MCF 10A (cell line): ENCODE measurements at regions of chr15 and their contacts with region 1.

Region 1: GRCh38 chr15:62071711-62072308 is 5.0 kb downstream of the C2CD4A start:
- DNase-seq: peak; percentile 44
- H3K4me3 Mint-ChIP-seq: no peak overlapping the region
- H3K27ac Mint-ChIP-seq: no peak overlapping the region
- H3K4me1 Mint-ChIP-seq: peaks cover 8% of the 10 kb centered on the region
- H3K27me3 Mint-ChIP-seq: peaks cover 9% of the 10 kb centered on the region
- CTCF ChIP-seq: peak; percentile 57

Region 2: GRCh38 chr15:61871926-61872522 is 199.8 kb before region 1 on chr15:
- CTCF ChIA-PET with region 1: no interaction called
- POLR2A ChIA-PET with region 1: no interaction called
- intact Hi-C with region 1: loop called (anchors 1 kb)
- DNase-seq: peak; percentile 38
- H3K4me3 Mint-ChIP-seq: no peak overlapping the region
- H3K27ac Mint-ChIP-seq: peak overlapping the region; percentile 31
- H3K4me1 Mint-ChIP-seq: no peaks in the 10 kb centered on the region
- H3K27me3 Mint-ChIP-seq: no peaks in the 10 kb centered on the region
- CTCF ChIP-seq: peak; percentile 54

Region 3: DNA sequence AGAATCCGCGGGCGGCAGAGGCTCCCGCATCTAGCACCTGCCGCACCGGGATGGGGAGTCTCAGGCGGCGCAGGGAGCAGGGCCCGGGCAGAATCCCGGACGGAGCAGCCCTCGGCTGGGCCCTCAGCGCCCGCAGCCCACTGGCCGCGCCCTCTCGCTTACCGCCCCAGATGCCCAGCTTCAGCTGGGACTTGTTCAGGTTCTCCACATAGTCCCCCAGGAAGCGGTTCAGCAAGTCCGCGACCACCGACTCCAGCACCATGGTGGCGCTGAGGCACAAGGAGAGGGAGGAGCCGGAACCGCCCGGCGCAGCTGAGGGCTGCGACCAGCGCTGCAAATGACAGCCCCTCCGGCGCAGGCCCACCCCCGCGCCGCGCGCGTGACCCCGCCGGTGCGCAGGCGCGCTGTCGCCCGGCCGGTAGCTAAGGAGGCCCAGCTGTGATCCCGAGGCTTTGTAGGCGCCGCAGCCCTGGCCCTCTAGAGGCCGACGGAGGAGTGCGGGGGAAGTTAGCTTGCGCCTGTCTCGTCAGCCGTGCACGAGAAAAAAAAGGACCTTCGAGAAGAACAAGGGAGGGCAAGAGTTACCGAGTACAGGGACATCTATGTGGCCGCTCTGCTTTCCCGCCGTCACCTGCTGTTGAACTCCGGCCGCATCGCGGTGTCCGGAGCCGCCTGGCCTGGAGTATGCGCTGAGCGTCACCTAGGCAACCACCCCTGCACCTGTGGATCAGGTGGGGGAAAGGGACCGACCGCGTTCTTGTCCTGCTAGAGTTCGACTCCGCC is 11.5 kb before region 1 on chr15 and contains the start of gene VPS13C:
- CTCF ChIA-PET with region 1: interaction called, 16 read pairs
- POLR2A ChIA-PET with region 1: interaction called, 20 read pairs
- intact Hi-C with region 1: no loop called
- DNase-seq: peak; percentile 90
- H3K4me3 Mint-ChIP-seq: peak within 1 kb of the TSS; percentile 88
- H3K27ac Mint-ChIP-seq: peak within 1 kb of the TSS; percentile 86
- H3K4me1 Mint-ChIP-seq: peaks cover 28% of the 10 kb centered on the region
- H3K27me3 Mint-ChIP-seq: no peaks in the 10 kb centered on the region
- CTCF ChIP-seq: peak; percentile 69
- total RNA-seq, gene VPS13C: 47.4 and 58.7 TPM in 2 replicates

Region 4: GRCh38 chr15:62083168-62084154 is 11.7 kb after region 1 on chr15:
- CTCF ChIA-PET with region 1: interaction called, 12 read pairs
- POLR2A ChIA-PET with region 1: interaction called, 9 read pairs
- intact Hi-C with region 1: no loop called
- DNase-seq: no peak
- H3K4me3 Mint-ChIP-seq: no peak overlapping the region
- H3K27ac Mint-ChIP-seq: no peak overlapping the region
- H3K4me1 Mint-ChIP-seq: peaks cover 9% of the 10 kb centered on the region
- H3K27me3 Mint-ChIP-seq: no peaks in the 10 kb centered on the region
- CTCF ChIP-seq: no peak

Region 5: GRCh38 chr15:62138124-62138523 is 66.3 kb after region 1 on chr15:
- CTCF ChIA-PET with region 1: interaction called, 5 read pairs
- POLR2A ChIA-PET with region 1: interaction called, 9 read pairs
- intact Hi-C with region 1: loop called (anchors 2 kb)
- DNase-seq: peak; percentile 86
- H3K4me3 Mint-ChIP-seq: no peak overlapping the region
- H3K27ac Mint-ChIP-seq: peak overlapping the region; percentile 43
- H3K4me1 Mint-ChIP-seq: peaks cover 52% of the 10 kb centered on the region
- H3K27me3 Mint-ChIP-seq: no peaks in the 10 kb centered on the region
- CTCF ChIP-seq: no peak

Region 6: GRCh38 chr15:62254137-62254934 is 182.5 kb after region 1 on chr15:
- CTCF ChIA-PET with region 1: no interaction called
- POLR2A ChIA-PET with region 1: no interaction called
- intact Hi-C with region 1: loop called (anchors 5 kb)
- DNase-seq: peak; percentile 69
- H3K4me3 Mint-ChIP-seq: no peak overlapping the region
- H3K27ac Mint-ChIP-seq: no peak overlapping the region
- H3K4me1 Mint-ChIP-seq: no peaks in the 10 kb centered on the region
- H3K27me3 Mint-ChIP-seq: peaks cover 11% of the 10 kb centered on the region
- CTCF ChIP-seq: peak; percentile 70

Region 7: DNA sequence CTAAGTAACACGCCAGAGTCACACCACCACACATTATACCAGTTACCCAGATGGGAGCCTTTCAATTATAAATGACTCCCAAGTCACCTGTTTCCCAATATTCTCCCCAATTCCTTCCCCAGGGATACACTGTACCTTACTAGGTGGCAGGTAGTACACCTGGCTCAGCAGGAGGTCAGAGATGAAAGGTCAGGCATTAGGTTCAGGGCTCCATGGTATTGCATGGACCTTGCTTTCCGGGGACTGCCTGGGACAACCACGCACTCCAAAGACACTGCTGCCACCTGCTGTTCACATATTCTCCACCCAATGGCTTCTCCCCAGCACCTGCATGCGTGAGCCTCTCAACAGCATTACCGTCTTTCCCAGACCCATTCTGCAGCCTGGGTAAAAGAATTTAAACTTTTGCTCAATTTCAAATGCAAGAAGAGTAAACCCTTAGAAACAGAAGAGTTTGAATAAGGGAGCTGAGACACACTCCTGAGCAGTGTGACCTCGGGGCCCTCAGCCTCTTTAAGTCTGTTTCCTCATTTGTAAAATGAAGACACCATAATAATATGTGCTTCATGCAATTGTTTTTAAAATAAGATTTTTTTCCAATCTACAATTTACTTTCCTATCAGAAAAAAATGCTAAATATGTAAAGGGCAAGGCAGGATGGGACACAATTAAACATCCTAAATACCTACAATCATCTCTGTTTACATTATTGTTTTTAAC is 1021.8 kb after region 1 on chr15:
- CTCF ChIA-PET with region 1: interaction called, 3 read pairs
- POLR2A ChIA-PET with region 1: no interaction called
- intact Hi-C with region 1: loop called (anchors 10 kb)
- DNase-seq: peak; percentile 82
- H3K4me3 Mint-ChIP-seq: no peak overlapping the region
- H3K27ac Mint-ChIP-seq: no peak overlapping the region
- H3K4me1 Mint-ChIP-seq: peaks cover 7% of the 10 kb centered on the region
- H3K27me3 Mint-ChIP-seq: no peaks in the 10 kb centered on the region
- CTCF ChIP-seq: peak; percentile 85